H1 (cell line): ENCODE measurements at regions of chr4 and their contacts with region 1.

Region 1: GRCh38 chr4:7910952-7911578 is 28.6 kb downstream of the AFAP1 start:
- DNase-seq: peak in 1 of 2 experiments; percentile 54
- H3K4me3 ChIP-seq: peak overlapping the region in 3 of 4 experiments; percentile 6 to 19 (median 11); a peak in 3 of 8 replicates
- H3K27ac ChIP-seq: peak overlapping the region; percentile 48
- H3K4me1 ChIP-seq: peaks cover 13 to 28% (median 16%) of the 10 kb centered on the region in 4 experiments
- H3K27me3 ChIP-seq: no peaks in the 10 kb centered on the region
- CTCF ChIP-seq: no peak
- EP300 ChIP-seq: no peak
- POLR2A ChIP-seq: no peak; a peak in 1 of 3 replicates
- RAD21 ChIP-seq: no peak

Region 2: GRCh38 chr4:7861440-7861881 is 49.6 kb before region 1 on chr4:
- CTCF ChIA-PET with region 1: no interaction called
- POLR2A ChIA-PET with region 1: no interaction called
- DNase-seq: peak in 1 of 2 experiments; percentile 61
- H3K4me3 ChIP-seq: peak overlapping the region in 1 of 4 experiments; percentile 17; a peak in 1 of 8 replicates
- H3K27ac ChIP-seq: peak overlapping the region; percentile 69
- H3K4me1 ChIP-seq: peaks cover 5 to 15% (median 9%) of the 10 kb centered on the region in 4 experiments
- H3K27me3 ChIP-seq: no peaks in the 10 kb centered on the region
- CTCF ChIP-seq: no peak
- EP300 ChIP-seq: peak in 1 of 2 experiments; percentile 57; a peak in 1 of 3 replicates
- POLR2A ChIP-seq: no peak
- RAD21 ChIP-seq: no peak

Region 3: DNA sequence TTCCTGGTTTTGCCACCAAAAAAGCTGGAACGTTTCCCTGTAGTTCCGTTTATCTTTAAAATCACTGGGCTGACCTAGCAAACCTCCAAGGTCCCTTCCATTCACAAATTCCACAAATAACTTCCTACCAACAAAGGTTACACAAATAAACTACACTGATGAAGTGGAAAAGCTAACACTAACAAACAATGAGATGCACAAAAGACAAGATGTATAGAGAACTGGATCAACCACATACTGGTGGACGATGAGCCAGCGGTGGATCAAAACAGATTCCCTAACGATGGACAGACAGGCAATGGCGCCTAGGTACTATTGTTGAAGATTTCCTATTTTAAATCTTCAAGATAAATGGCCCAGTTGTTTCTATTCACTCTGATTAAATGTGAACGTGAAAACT is 13.1 kb after region 1 on chr4:
- CTCF ChIA-PET with region 1: interaction called, 11 read pairs
- POLR2A ChIA-PET with region 1: interaction called, 10 read pairs
- DNase-seq: no peak
- H3K4me3 ChIP-seq: no peak overlapping the region
- H3K27ac ChIP-seq: no peak overlapping the region
- H3K4me1 ChIP-seq: peaks cover 0 to 3% (median under 1%) of the 10 kb centered on the region in 4 experiments; a peak in 3 of 7 replicates
- H3K27me3 ChIP-seq: no peaks in the 10 kb centered on the region
- CTCF ChIP-seq: no peak
- EP300 ChIP-seq: no peak
- POLR2A ChIP-seq: no peak
- RAD21 ChIP-seq: no peak